ENCODE measurements at regions of chr1 and their contacts with region 1.

Region 1: DNA sequence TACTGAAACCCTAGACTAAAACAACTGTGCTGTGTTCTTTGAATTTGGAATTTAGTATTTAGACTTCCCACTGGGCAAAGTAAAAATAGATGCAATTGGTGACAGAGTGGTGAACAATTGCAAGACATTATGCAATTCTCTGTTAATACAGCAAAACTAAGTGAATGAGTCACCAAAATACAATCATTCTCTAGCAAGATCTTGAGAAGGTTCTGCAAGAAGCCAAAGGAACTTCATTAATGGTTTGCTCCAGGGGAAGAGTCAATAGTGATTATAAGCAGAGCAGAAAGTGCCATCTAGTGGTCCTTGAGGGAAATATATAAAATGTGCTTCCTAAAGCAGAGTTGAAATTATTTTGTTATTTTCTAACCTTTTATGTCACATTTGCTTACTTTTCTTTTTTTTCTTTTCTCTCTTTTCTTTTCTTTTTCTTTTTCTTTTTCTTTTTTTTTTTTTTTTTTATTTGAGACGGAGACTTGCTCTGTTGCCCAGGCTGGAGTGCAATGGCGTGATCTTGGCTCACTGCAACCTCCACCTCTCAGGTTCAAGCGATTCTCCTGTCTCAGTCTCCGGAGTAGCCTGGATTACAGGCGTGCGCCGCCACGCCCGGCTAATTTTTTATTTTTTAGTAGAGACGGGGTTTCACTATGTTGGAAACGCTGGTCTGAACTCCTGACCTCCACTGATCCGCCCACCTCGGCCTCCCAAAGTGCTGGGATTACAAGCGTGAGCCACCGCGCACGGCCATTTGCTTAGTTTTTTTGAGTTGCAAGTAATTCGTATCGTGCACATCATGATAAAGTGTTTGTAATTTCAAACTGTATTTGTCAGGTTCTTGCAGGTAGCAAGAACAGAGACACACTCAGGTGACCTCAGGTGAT is 99.2 kb downstream of the CTH start:
- DNase-seq: no peak
- ATAC-seq: no peak

Region 2: DNA sequence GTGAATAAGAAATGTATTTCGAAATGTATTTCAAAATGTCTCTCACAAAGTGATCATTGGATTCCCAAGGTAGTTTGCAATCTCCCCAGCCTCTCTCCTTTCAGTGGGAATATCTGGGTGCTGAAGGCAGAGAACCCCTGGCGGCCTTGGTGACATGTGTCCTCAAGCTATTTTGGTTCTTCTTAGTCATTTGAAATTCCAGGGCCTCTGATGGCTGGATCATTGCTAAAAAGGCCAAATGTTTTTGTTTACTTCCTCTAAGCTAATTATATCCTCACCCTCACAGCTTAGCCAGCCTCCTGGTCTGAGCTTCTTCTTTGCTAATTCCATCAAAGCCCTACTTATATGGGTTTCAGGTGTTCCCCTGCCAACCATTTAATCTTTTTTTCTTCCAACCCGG is 376.1 kb before region 1 on chr1:
- intact Hi-C with region 1: loop called (anchors 5 kb)
- DNase-seq: no peak
- ATAC-seq: no peak

Region 3: DNA sequence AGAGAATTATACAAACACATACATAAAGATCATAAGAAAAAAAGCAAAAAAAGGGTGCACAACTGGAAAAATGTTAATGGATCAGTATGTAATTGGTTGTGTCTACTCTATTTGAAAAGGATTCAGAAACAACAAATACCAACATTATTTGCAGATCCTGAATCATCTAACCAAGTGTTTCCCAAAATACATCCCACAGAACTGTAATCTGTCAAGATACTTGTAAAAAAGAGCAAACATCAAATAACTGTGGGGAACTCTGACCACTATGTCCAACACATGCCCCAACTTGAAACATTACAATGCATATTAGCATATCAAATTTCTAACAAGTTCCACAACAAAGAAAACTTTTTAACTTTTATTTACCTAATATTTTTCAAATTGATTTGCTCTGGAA is 178.3 kb before region 1 on chr1:
- intact Hi-C with region 1: no loop called
- DNase-seq: no peak
- ATAC-seq: no peak

Region 4: DNA sequence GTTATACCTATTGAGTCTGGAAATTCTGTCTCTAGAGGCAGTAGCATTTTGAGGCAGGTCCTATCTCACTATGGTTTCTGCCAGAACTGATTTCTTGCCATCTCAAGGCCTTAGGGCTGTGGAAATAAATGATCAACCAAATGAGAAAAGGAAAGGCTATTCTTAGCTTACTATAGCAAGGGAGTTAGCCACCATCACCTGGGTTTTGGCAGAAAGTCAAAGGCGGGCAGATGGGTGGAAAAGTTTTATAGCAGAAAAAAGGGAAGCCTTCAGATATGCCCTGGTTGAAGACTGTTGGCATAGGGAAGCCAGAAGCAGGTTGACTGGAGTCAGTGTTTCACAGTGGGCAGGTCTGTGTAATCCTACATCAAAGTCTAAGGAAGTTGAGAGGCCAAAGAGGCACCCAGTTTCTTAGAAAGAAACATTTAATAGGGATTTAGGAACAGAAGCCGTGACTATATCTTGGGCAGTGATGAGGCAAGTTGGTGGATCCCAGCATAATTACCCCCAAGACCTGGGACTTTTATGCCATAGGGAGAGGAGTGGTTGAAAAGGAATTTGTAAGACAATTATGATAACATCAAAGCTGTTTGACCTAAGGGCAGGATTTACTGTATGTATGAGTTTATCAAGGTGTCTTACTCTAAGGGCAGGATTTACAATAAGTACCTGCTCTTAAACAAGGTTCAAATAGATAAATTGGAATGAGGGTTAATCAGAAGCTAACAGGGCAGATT is 69.4 kb before region 1 on chr1:
- intact Hi-C with region 1: loop called (anchors 5 kb)
- DNase-seq: no peak
- ATAC-seq: no peak